ENCODE measurements at regions of chr11 and their contacts with region 1.

Region 1: DNA sequence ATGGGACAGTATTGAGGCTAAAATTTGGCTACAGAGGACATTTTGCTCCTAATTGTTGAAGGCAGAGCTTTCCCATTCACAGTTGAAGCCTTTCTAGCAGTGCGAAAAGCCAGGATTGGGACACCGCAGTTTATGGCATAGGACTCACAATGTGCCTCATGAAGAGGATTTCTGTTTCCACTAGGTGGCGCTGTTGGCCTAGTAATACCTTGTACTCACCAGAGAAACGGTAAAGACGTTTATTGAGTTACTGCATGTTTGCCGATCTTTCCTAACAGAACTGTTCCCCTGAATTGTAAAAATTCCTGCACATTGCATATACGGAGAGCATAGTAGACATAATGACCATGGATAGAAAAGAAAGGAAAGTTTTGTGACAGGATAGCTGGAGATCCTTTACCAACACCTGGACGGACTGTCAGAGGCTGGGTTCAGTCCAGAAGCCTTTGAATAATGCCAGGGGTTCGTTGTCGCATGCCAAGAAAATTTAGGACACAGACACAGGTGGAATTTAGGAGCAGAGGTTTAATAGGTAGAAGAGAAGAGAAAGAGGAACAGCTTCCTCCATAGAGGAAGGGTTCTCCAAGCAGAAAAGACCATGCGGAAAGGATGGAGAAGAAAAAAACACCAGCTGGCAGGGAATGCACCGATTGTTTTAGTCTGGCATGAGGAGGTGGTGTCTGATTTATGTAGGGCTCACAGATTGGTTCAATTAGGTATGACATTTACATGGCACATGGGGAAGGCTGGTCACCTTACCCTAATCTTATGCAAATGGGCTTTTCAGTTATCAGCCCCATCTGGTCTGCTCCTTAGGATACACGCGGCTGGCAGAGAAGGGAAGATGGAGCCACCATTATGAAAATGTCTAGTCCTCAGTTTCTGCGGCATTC is 10.8 kb upstream of the OR51D1 start:
- DNase-seq: peak in 1 of 2 donors; percentile 65
- ATAC-seq: peak in 7 of 8 donors; percentile 55 to 76 (median 72)
- H3K4me3 ChIP-seq: no peak overlapping the region
- H3K27ac ChIP-seq: no peak overlapping the region
- H3K4me1 ChIP-seq: no peaks in the 10 kb centered on the region
- H3K27me3 ChIP-seq: peaks cover 0 to 3% (median 0%) of the 10 kb centered on the region in 7 donors
- CTCF ChIP-seq: peak; percentile 50 to 77 (median 69)

Region 2: DNA sequence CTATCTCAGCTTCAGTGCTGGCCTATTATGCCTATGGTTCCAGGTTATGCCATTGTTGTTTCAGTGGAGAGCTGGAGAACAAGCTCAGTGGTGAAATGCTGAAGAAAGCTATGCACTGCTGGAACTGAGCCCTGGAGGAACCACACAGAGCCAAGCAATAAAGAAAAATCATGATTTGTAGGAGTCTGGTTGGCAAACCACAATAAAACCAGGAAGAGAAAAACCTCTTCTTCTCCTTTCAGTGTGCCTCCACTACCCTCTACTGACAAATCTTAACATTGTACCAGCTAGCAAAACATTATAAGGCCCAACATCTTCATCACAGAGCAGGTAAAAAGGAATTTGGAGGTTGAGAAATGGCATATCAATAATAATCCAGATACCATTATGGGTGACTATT is 200.0 kb after region 1 on chr11:
- intact Hi-C with region 1: loop called in 2 of 10 experiments (anchors 1 to 2 kb)
- DNase-seq: no peak
- ATAC-seq: peak in 4 of 8 donors; percentile 34 to 70 (median 56)
- H3K4me3 ChIP-seq: no peak overlapping the region
- H3K27ac ChIP-seq: no peak overlapping the region
- H3K4me1 ChIP-seq: no peaks in the 10 kb centered on the region
- H3K27me3 ChIP-seq: no peaks in the 10 kb centered on the region
- CTCF ChIP-seq: peak; percentile 31 to 69 (median 57)

Region 3: DNA sequence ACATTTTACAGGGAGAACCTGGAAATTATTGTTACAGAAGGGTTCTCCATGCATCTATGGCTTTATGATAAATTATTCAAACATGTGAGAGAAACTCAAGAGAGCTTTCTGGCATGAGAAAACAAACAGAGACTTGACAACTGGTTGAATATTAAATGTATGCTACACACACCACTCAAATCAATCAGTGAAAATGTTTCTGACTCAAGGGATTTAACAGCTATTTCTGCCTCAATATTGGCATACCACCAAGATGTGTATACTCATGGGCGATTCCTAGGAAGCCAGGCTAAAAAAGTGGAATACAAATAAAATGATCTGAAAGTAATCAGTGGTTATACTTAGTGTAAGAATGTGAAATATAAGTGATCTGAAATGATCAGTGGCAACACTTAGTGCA is 239.4 kb after region 1 on chr11:
- intact Hi-C with region 1: no loop called
- DNase-seq: no peak
- ATAC-seq: no peak
- H3K4me3 ChIP-seq: no peak overlapping the region
- H3K27ac ChIP-seq: no peak overlapping the region
- H3K4me1 ChIP-seq: peaks cover 0 to 7% (median 0%) of the 10 kb centered on the region in 9 donors
- H3K27me3 ChIP-seq: no peaks in the 10 kb centered on the region
- CTCF ChIP-seq: no peak

Region 4: DNA sequence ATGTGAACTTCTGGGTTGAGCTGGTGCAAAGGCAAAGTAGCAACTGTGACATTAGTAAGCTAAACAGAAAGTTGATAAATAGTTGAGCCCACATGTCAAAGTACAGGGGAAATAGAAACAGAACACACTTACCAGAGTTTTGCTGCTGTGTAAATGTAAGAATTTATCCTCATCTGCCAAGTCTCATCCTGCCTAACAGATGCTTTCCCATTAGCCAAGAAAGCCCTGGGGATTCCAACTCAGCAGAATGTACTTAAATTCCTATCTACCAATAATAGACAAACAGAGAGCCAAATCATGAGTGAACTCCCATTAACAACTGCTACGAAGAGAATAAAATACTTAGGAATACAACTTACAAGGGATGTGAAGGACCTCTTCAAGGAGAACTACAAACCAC is 336.4 kb after region 1 on chr11:
- intact Hi-C with region 1: no loop called
- DNase-seq: no peak
- ATAC-seq: no peak
- H3K4me3 ChIP-seq: no peak overlapping the region
- H3K27ac ChIP-seq: no peak overlapping the region
- H3K4me1 ChIP-seq: no peaks in the 10 kb centered on the region
- H3K27me3 ChIP-seq: no peaks in the 10 kb centered on the region
- CTCF ChIP-seq: no peak

Region 5: DNA sequence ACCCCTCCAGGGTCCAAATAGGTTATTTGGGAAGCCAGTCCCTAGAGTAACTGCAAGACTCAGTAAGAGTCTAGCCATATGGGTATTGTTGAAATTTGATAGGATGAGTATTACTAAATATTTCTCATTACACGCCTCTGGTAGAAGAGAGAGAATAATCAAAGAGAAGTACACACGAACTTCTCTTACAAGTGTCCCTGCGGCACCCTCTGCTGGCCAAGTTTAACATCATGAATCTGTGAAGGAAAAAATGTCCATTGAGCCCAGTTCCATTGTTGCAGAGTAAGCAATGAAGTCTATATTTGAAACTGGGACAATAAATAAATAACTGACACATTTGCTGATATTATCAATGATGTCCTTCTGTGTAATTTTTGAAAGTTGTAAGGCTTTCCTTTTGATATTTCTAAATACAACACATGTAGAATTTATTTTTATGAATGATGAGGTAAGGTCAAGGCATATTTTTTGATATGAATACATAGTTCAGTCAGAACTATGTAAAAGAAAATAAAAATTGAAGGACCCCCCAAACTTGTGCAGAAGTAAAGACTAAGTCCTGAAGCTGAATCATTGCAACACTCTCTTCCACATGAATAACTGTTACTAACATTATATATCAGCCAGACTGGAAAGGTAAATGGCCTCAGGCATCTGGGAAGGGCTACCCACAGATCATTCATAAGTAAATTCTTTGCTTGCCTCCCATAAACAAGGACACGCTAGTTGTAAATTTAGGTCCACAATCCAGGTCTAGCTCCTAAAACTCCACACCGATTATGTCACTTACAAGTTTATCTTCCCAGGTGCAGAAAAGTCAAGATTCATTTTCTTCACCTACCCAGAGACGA is 378.2 kb after region 1 on chr11:
- intact Hi-C with region 1: loop called in 4 of 10 experiments (anchors 2 to 5 kb)
- DNase-seq: peak; percentile 21 to 34
- ATAC-seq: peak in 2 of 8 donors; percentile 41 to 44
- H3K4me3 ChIP-seq: no peak overlapping the region
- H3K27ac ChIP-seq: no peak overlapping the region
- H3K4me1 ChIP-seq: no peaks in the 10 kb centered on the region
- H3K27me3 ChIP-seq: peaks cover 0 to 6% (median 0%) of the 10 kb centered on the region in 7 donors
- CTCF ChIP-seq: peak; percentile 24 to 74 (median 63)

Region 6: DNA sequence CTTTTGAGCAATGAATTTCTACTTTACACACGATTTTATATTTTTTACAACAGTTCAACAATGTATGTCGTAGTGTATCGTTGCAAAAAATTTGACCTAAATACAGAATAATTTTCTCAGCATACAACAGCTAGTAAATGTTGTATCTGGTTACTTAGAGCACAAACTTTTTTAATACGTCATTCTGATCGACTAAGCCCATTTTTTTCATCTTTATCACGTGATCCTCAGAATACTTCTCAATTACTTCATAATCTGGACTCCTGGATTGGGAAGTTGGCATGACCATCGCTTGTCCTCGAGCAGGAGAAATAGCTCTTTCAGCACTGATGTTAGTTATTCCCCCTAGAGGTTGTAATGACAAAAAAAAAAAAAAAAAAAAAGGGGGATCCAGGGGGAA is 384.8 kb after region 1 on chr11:
- intact Hi-C with region 1: loop called in 2 of 10 experiments (anchors 5 kb)
- DNase-seq: no peak
- ATAC-seq: no peak
- H3K4me3 ChIP-seq: no peak overlapping the region
- H3K27ac ChIP-seq: no peak overlapping the region
- H3K4me1 ChIP-seq: no peaks in the 10 kb centered on the region
- H3K27me3 ChIP-seq: peaks cover 0 to 3% (median 0%) of the 10 kb centered on the region in 7 donors
- CTCF ChIP-seq: no peak

Region 7: DNA sequence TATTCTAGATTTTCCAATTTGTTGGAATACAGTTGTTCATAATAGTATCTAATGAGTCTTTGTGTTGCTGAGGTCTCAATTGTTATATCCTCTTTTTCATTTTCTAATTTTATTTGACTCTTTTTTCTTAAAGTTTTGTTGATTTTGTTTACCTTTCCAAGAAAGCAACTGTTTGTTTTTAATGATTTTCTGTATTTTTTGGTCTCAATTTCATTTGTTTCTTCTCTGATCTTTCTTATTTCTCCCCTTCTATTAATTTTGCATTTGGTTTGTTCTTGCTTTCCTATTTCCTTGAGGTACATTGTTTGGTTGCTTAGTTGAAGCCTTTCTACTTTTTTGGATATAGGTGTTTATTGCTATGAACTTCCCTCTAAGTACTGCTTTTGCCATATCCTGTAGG is 533.4 kb after region 1 on chr11:
- intact Hi-C with region 1: no loop called
- DNase-seq: no peak
- ATAC-seq: no peak
- H3K4me3 ChIP-seq: no peak overlapping the region
- H3K27ac ChIP-seq: no peak overlapping the region
- H3K4me1 ChIP-seq: no peaks in the 10 kb centered on the region
- H3K27me3 ChIP-seq: no peaks in the 10 kb centered on the region
- CTCF ChIP-seq: no peak

Region 8: DNA sequence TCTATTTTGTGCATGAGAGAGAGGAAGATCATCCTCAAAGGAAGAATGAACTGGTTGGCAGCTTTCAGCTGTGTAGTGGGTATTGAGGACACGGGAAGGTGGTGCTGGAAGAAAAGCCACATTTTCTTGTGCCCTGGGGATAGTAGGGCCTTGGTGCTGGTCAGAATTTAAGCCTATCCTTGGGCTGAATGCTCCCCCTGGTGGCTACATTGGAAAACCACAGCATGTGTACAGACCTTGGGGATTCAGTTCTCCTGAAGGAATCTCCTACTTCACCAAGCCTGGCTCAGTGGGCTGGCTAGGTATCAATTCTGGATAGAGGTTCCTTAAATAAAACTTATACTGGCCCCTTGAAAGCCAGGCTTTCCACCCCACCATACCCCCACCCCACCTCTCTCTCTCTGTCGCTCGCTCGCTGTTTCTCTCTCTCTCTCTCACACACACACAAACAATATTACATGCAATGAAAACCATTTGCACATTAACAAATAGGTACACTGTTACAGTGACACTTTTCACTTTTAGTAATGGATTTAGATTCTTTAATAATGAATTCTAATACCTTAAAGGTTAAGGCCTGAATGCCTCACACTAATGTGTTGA is 754.4 kb after region 1 on chr11:
- intact Hi-C with region 1: loop called in 1 of 10 experiments (anchors 10 kb)
- DNase-seq: peak in 1 of 2 donors; percentile 32
- ATAC-seq: peak in 5 of 8 donors; percentile 52 to 75 (median 66)
- H3K4me3 ChIP-seq: no peak overlapping the region
- H3K27ac ChIP-seq: no peak overlapping the region
- H3K4me1 ChIP-seq: no peaks in the 10 kb centered on the region
- H3K27me3 ChIP-seq: no peaks in the 10 kb centered on the region
- CTCF ChIP-seq: peak; percentile 25 to 73 (median 62)